GM10248 (cell line): ENCODE measurements at regions of chr3 and their contacts with region 1.

Region 1: DNA sequence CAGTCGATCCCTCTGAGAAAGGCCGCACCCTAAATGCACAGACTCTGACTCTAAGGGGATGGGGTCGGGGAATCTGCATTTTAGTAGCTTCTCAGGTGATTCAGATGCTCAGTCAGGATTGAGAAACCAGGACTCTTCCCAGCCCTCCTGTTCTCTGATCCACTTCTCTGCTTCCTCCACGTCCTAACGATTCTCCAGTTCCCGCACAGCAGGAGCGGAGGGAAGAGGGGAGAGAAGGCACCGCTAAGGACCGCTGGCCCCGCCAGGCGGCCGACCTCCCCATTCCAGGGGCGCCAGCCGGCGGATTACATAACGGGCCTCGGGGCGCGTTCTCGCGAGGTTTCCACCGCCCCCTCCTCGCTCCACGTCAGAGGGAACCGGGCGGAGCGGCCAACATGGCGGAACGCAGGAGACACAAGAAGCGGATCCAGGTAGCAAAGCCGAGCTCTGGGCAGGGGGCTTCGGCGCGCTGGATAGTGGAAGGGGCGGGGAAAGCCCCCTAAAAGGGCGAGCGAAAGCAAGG is at the start of gene SEC62:
- DNase-seq: peak; percentile 93
- CTCF ChIP-seq: peak; percentile 67

Region 2: DNA sequence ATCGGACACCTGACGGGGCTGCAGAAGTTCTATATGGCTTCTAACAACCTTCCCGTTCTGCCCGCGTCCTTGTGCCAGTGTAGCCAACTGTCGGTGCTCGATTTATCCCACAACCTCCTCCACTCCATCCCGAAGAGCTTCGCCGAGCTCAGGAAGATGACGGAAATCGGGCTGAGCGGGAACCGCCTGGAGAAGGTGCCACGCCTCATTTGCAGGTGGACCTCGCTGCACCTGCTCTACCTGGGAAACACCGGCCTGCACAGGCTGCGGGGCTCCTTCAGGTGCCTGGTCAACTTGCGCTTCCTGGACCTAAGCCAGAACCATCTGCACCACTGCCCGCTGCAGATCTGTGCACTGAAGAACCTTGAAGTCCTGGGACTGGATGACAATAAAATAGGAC is 143.9 kb before region 1 on chr3:
- CTCF ChIA-PET with region 1: no interaction called
- POLR2A ChIA-PET with region 1: no interaction called
- DNase-seq: no peak
- CTCF ChIP-seq: no peak

Region 3: GRCh38 chr3:169863458-169863899 is 103.0 kb before region 1 on chr3:
- CTCF ChIA-PET with region 1: interaction called, 13 read pairs
- POLR2A ChIA-PET with region 1: no interaction called
- DNase-seq: peak; percentile 66
- CTCF ChIP-seq: peak; percentile 86

Region 4: GRCh38 chr3:169945313-169945712 is 21.2 kb before region 1 on chr3:
- CTCF ChIA-PET with region 1: interaction called, 16 read pairs
- POLR2A ChIA-PET with region 1: interaction called, 8 read pairs
- DNase-seq: peak; percentile 76
- CTCF ChIP-seq: no peak

Region 5: DNA sequence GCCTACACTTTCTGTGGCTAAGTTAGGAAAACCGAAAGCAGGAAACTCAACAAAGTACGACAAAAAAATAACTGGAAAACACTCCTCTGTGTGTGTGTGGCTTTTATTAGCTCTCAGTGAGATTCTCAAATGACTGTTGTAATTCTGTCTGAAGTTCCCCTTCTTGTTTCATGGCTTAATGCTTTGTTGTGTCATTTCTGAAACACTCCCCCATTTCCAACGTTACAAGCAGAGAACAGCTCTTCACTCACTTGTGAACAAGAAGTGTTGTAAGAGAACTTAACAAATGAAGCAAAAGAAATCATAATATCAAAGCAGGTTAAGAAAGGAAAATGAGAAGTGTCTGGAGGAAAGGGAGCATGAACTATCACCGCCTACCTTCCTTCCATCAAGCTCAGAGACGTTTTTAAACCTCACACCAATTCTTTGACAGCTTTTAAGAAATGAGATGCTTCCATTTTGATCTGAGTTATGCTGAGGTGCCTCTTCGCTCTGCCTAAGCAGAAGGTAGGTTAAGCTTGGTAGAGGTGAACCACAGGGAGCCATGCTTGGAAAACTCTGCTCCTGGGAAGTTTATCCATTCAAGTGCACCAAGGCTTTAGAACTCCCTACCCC is 12.2 kb before region 1 on chr3:
- CTCF ChIA-PET with region 1: interaction called, 15 read pairs
- POLR2A ChIA-PET with region 1: interaction called, 7 read pairs
- DNase-seq: peak; percentile 43
- CTCF ChIP-seq: no peak

Region 6: DNA sequence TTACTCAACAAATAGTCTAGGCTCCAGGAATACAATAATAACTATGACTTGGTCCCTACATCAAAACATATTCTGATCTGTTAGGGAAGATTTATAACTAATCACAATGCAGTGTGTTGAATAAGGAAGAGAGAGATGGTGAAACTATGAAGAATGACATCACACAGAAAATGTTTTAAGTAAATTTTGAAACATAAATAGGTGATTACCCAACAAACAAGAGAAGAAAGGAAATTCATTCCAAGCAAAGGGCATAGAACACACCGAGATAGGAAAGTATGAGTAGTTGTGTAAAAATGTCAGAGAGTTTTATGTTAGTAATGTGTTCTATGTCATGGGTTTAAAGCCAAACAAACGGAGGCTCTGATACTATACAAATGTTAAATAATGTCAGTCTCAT is 13.6 kb after region 1 on chr3:
- CTCF ChIA-PET with region 1: interaction called, 38 read pairs
- POLR2A ChIA-PET with region 1: interaction called, 3 read pairs
- DNase-seq: no peak
- CTCF ChIP-seq: no peak